Uterus (tissue), 4 donors: ENCODE measurements at regions of chr4 and their contacts with region 1.

Region 1: GRCh38 chr4:139734875-139735380 is 69.3 kb downstream of the MGST2 start:
- DNase-seq: peak; percentile 91 to 95
- H3K4me3 ChIP-seq: peak overlapping the region; percentile 51 to 56
- H3K27ac ChIP-seq: peak overlapping the region; percentile 96 to 97
- H3K4me1 ChIP-seq: no peaks in the 10 kb centered on the region
- H3K27me3 ChIP-seq: no peaks in the 10 kb centered on the region
- CTCF ChIP-seq: peak; percentile 78 to 94 (median 88)
- POLR2A ChIP-seq: peak; percentile 5 to 53

Region 2: DNA sequence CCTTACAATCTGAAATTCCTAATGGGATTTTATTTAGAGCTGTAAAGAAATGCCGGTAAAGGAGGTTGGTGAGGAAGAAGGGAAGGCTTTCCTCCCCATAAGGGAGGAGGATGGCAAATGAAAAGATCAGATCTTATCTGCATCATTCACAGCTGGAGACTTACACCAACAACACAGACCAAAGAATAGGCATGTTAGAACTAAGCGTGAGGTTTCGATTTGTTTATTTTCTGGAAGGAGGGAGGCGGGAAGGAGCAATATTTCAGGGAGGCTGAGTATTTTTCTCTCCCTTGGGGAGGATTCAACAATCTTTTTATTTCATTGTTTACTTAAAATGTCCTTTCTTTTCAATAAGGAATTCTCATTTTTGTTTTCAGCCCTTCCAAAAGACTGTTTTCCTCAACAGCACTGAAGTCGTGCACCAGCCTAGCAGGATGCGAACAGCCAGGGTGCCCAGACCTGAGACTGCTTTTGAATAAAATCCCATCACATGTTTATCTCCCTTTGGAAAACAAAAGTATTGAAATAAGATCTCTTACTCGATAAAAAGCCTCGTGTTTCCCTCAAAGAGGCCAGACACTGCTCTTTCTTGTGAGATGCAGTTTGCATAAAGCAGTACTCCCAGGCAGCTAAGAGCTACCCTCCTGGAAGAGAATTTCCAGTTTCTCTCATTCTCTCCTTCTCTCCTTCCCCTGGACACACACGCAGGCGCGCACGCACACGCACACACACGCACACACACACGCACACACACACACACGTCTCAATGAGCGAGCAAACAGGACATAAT is 166.8 kb after region 1 on chr4:
- intact Hi-C with region 1: loop called (anchors 10 kb)
- DNase-seq: no peak
- H3K4me3 ChIP-seq: peak overlapping the region; percentile 30 to 41
- H3K27ac ChIP-seq: peak overlapping the region; percentile 71 to 91
- H3K4me1 ChIP-seq: peaks cover 0 to 5% of the 10 kb centered on the region in 2 donors
- H3K27me3 ChIP-seq: no peaks in the 10 kb centered on the region
- CTCF ChIP-seq: no peak
- POLR2A ChIP-seq: no peak

Region 3: GRCh38 chr4:140252742-140253555 is 518.0 kb after region 1 on chr4:
- intact Hi-C with region 1: loop called (anchors 10 kb)
- DNase-seq: peak; percentile 79 to 82
- H3K4me3 ChIP-seq: peak overlapping the region; percentile 58 to 69
- H3K27ac ChIP-seq: peak overlapping the region; percentile 97 to 99
- H3K4me1 ChIP-seq: peaks cover 0 to 14% of the 10 kb centered on the region in 2 donors
- H3K27me3 ChIP-seq: no peaks in the 10 kb centered on the region
- CTCF ChIP-seq: peak; percentile 85 to 100 (median 90)
- POLR2A ChIP-seq: peak in 1 of 2 donors; percentile 35

Region 4: GRCh38 chr4:140326395-140326993 is 591.6 kb after region 1 on chr4:
- intact Hi-C with region 1: loop called (anchors 10 kb)
- DNase-seq: peak; percentile 28 to 54
- H3K4me3 ChIP-seq: no peak overlapping the region
- H3K27ac ChIP-seq: no peak overlapping the region
- H3K4me1 ChIP-seq: no peaks in the 10 kb centered on the region
- H3K27me3 ChIP-seq: no peaks in the 10 kb centered on the region
- CTCF ChIP-seq: peak; percentile 66 to 82 (median 69)
- POLR2A ChIP-seq: no peak